Posterior vena cava (tissue), 2 donors: ENCODE measurements at regions of chr10 and their contacts with region 1.

Region 1: GRCh38 chr10:784403-785088 is 95.1 kb upstream of the DIP2C start:
- DNase-seq: peak; percentile 94

Region 2: DNA sequence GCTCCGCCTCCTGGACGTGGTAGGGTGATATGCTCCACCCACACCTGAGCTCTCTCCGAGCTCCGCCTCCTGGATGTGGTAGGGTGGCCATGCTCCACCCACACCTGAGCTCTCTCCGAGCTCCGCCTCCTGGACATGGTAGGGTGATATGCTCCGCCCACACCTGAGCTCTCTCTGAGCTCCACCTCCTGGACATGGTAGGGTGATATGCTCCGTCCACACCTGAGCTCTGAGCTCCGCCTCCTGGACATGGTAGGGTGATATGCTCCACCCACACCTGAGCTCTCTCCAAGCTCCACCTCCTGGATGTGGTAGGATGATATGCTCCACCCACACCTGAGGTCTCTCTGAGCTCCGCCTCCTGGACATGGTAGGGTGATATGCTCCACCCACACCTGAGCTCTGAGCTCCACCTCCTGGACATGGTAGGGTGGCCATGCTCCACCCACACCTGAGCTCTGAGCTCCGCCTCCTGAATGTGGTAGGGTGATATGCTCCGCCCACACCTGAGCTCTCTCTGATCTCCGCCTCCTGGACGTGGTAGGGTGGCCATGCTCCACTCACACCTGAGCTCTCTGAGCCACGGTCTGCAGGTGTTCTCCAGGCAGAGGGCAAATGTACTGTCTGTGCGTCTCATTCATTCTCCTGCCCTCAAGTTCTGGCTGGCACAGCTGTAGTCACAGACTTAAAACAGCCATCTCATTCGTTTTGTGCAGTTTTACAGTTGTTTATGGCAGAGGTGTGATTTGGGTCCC is 347.5 kb before region 1 on chr10:
- intact Hi-C with region 1: loop called in 1 of 2 experiments (anchors 10 kb)
- DNase-seq: no peak

Region 3: DNA sequence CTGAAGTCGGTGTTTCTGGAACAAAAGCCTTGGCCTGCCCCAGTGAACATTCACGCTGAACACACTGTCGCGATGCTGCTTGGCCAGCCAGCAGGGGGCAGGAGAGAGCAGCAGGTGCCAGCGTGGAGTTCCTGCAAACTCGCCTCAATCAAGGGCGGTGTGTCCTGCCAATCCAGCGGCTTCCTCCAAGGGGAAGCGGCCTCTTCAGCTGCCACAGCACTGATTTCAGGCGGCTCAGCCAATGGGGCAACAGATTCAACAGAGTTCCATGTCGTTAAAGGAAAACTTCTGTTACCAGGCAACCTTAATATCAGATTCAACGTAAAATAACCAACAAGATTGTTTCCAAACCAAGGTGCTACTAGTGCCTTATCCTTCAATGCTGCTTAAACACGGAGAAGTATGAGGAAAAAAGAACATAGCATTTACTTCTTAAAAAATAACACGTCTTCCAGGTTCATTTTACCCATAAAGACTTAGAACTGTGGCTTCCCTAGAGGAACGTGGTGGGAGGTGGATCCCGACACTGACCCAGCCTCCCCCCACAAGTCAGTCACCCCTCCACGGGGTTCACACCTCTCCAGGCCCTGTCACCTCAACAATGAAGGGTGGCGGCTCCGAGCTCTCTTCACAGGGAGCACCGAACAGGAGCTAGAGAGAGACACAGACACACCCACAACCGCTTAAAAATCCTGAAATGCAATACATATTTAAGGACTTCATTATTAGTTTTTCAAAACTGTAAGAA is 273.3 kb before region 1 on chr10:
- intact Hi-C with region 1: loop called in 1 of 2 experiments (anchors 10 kb)
- DNase-seq: peak; percentile 96

Region 4: GRCh38 chr10:659688-660141 is 124.8 kb before region 1 on chr10:
- intact Hi-C with region 1: loop called in 1 of 2 experiments (anchors 10 kb)
- DNase-seq: no peak